ENCODE measurements at regions of chr7 and their contacts with region 1.

Region 1: DNA sequence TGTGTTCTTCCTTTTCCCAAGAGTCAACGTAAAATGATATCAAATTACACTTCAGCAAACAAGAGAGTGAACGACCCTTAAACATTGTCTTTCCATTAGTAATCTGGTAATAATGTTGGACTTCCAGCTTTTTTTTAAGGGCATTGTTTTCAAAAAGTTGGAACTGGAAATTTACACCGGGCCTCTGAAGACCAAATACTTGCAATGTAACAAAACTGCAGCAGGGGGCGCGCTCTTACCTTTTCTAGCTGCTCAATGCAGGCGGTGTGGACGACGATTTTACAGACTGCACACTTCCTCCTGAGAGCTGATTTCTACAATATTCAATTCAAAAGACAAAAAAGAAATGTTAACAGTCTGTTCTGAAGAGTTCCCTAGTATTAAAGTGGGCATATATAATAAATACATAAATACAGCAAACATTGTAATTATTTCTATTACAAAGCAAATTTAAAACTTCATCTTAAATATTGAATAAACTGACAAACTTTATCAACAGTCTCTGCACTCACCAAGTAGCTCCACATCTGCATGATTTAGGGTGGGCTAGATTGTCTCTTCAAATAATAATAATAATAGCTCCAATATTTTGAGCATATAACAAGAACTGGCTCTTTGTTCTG is 190.4 kb downstream of the DGKI start:
- DNase-seq: peak; percentile 79
- ATAC-seq: peak; percentile 89
- H3K4me3 ChIP-seq: no peak overlapping the region
- H3K27ac ChIP-seq: no peak overlapping the region
- H3K4me1 ChIP-seq: peaks cover 3% of the 10 kb centered on the region
- H3K27me3 ChIP-seq: no peaks in the 10 kb centered on the region
- CTCF ChIP-seq: peak; percentile 89
- POLR2A ChIP-seq: 0 out of 2 replicates have a peak, but pooled peaks have one; percentile 43
- RAD21 ChIP-seq: peak; percentile 94

Region 2: GRCh38 chr7:137816696-137817320 is 160.5 kb after region 1 on chr7:
- CTCF ChIA-PET with region 1: interaction called, 10 read pairs
- POLR2A ChIA-PET with region 1: no interaction called
- dilution Hi-C with region 1: no loop called
- in situ Hi-C with region 1: no loop called
- intact Hi-C with region 1: no loop called
- DNase-seq: no peak
- ATAC-seq: no peak
- H3K4me3 ChIP-seq: no peak overlapping the region
- H3K27ac ChIP-seq: no peak overlapping the region
- H3K4me1 ChIP-seq: peaks cover 11% of the 10 kb centered on the region
- H3K27me3 ChIP-seq: no peaks in the 10 kb centered on the region
- CTCF ChIP-seq: peak; percentile 37
- POLR2A ChIP-seq: no peak
- RAD21 ChIP-seq: peak; percentile 45

Region 3: GRCh38 chr7:137836113-137836509 is 179.8 kb after region 1 on chr7:
- CTCF ChIA-PET with region 1: interaction called, 13 read pairs
- POLR2A ChIA-PET with region 1: no interaction called
- dilution Hi-C with region 1: no loop called
- in situ Hi-C with region 1: no loop called
- intact Hi-C with region 1: no loop called
- DNase-seq: peak; percentile 76
- ATAC-seq: peak; percentile 75
- H3K4me3 ChIP-seq: no peak overlapping the region
- H3K27ac ChIP-seq: no peak overlapping the region
- H3K4me1 ChIP-seq: peaks cover 9% of the 10 kb centered on the region
- H3K27me3 ChIP-seq: no peaks in the 10 kb centered on the region
- CTCF ChIP-seq: no peak
- POLR2A ChIP-seq: no peak
- RAD21 ChIP-seq: no peak

Region 4: GRCh38 chr7:137846827-137847567 is 190.7 kb after region 1 on chr7 and contains the start of gene DGKI:
- CTCF ChIA-PET with region 1: interaction called, 8 read pairs
- POLR2A ChIA-PET with region 1: no interaction called
- dilution Hi-C with region 1: no loop called
- in situ Hi-C with region 1: no loop called
- intact Hi-C with region 1: loop called (anchors 2 kb)
- DNase-seq: no peak
- ATAC-seq: peak; percentile 82
- H3K4me3 ChIP-seq: peak within 1 kb of the TSS; percentile 37
- H3K27ac ChIP-seq: no peak within 1 kb of the TSS
- H3K4me1 ChIP-seq: peaks cover 12% of the 10 kb centered on the region; the same call in 1 of the 2 replicates
- H3K27me3 ChIP-seq: no peaks in the 10 kb centered on the region; the same call in 1 of the 2 replicates
- CTCF ChIP-seq: no peak
- POLR2A ChIP-seq: no peak
- RAD21 ChIP-seq: no peak
- total RNA-seq, gene DGKI: 15.3 and 15.8 TPM in 2 replicates

Region 5: GRCh38 chr7:137898839-137899721 is 242.7 kb after region 1 on chr7:
- CTCF ChIA-PET with region 1: interaction called, 16 read pairs
- POLR2A ChIA-PET with region 1: no interaction called
- dilution Hi-C with region 1: no loop called
- in situ Hi-C with region 1: loop called (anchors 5 kb)
- intact Hi-C with region 1: loop called (anchors 1 kb)
- DNase-seq: peak; percentile 66
- ATAC-seq: peak; percentile 94
- H3K4me3 ChIP-seq: no peak overlapping the region
- H3K27ac ChIP-seq: no peak overlapping the region
- H3K4me1 ChIP-seq: no peaks in the 10 kb centered on the region
- H3K27me3 ChIP-seq: no peaks in the 10 kb centered on the region
- CTCF ChIP-seq: peak; percentile 90
- POLR2A ChIP-seq: no peak
- RAD21 ChIP-seq: peak; percentile 97

Region 6: GRCh38 chr7:138002096-138002827 is 345.9 kb after region 1 on chr7:
- CTCF ChIA-PET with region 1: interaction called, 6 read pairs
- POLR2A ChIA-PET with region 1: no interaction called
- dilution Hi-C with region 1: no loop called
- in situ Hi-C with region 1: loop called (anchors 10 kb)
- intact Hi-C with region 1: no loop called
- DNase-seq: peak; percentile 100
- ATAC-seq: peak; percentile 90
- H3K4me3 ChIP-seq: peak overlapping the region; percentile 85
- H3K27ac ChIP-seq: no peak overlapping the region; the same call in 1 of the 2 replicates
- H3K4me1 ChIP-seq: peaks cover 6% of the 10 kb centered on the region
- H3K27me3 ChIP-seq: no peaks in the 10 kb centered on the region
- CTCF ChIP-seq: peak; percentile 95
- POLR2A ChIP-seq: no peak
- RAD21 ChIP-seq: peak; percentile 53

Region 7: GRCh38 chr7:138008547-138009349 is 352.4 kb after region 1 on chr7:
- CTCF ChIA-PET with region 1: interaction called, 5 read pairs
- POLR2A ChIA-PET with region 1: no interaction called
- dilution Hi-C with region 1: no loop called
- in situ Hi-C with region 1: loop called (anchors 10 kb)
- intact Hi-C with region 1: loop called (anchors 1 kb)
- DNase-seq: peak; percentile 68
- ATAC-seq: peak; percentile 87
- H3K4me3 ChIP-seq: no peak overlapping the region
- H3K27ac ChIP-seq: no peak overlapping the region; the same call in 1 of the 2 replicates
- H3K4me1 ChIP-seq: peaks cover 5% of the 10 kb centered on the region; the same call in 1 of the 2 replicates
- H3K27me3 ChIP-seq: peaks cover 5% of the 10 kb centered on the region; the same call in 1 of the 2 replicates
- CTCF ChIP-seq: peak; percentile 94
- POLR2A ChIP-seq: no peak
- RAD21 ChIP-seq: peak; percentile 90

Measured in IMR-90 (cell line).